Heart left ventricle (tissue), 16 donors: ENCODE measurements at regions of chr3 and their contacts with region 1.

Region 1: GRCh38 chr3:189419038-189419437 is 212.2 kb upstream of the TP63 start:
- DNase-seq: no peak
- ATAC-seq: no peak
- H3K4me3 ChIP-seq: no peak overlapping the region
- H3K27ac ChIP-seq: no peak overlapping the region
- H3K4me1 ChIP-seq: no peaks in the 10 kb centered on the region
- H3K27me3 ChIP-seq: no peaks in the 10 kb centered on the region
- CTCF ChIP-seq: no peak
- POLR2A ChIP-seq: no peak

Region 2: DNA sequence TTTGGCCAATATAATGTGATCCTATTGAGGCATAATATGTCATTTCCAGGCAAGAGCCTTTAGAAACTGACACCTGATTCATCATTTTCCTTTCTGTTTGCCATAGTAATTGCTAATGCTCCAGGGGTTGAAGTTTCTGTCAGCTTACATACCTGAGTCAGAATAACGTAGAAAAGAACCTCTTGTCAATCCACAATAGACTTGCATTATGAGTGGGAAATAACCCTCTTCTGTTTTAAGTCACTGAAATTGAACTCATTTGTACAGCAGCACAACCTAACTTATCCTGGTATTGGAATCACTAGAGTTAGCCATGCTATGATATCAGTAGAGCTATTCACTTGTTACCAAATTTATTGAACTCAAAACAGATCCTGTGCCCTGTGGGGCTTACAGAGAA is 110.4 kb after region 1 on chr3:
- intact Hi-C with region 1: loop called in 1 of 10 experiments (anchors 10 kb)
- DNase-seq: no peak
- ATAC-seq: no peak
- H3K4me3 ChIP-seq: no peak overlapping the region
- H3K27ac ChIP-seq: no peak overlapping the region
- H3K4me1 ChIP-seq: no peaks in the 10 kb centered on the region
- H3K27me3 ChIP-seq: no peaks in the 10 kb centered on the region
- CTCF ChIP-seq: no peak
- POLR2A ChIP-seq: no peak

Region 3: GRCh38 chr3:189563866-189564563 is 145.0 kb after region 1 on chr3:
- intact Hi-C with region 1: no loop called
- DNase-seq: no peak
- ATAC-seq: no peak
- H3K4me3 ChIP-seq: no peak overlapping the region
- H3K27ac ChIP-seq: no peak overlapping the region
- H3K4me1 ChIP-seq: no peaks in the 10 kb centered on the region
- H3K27me3 ChIP-seq: no peaks in the 10 kb centered on the region
- CTCF ChIP-seq: no peak
- POLR2A ChIP-seq: no peak